Endothelial cell of umbilical vein (primary cell): ENCODE measurements at regions of chr5 and their contacts with region 1.

Region 1: GRCh38 chr5:41843456-41844370 is 26.5 kb downstream of the OXCT1 start:
- DNase-seq: peak; percentile 66
- H3K4me3 ChIP-seq: no peak overlapping the region
- H3K27ac ChIP-seq: no peak overlapping the region
- H3K4me1 ChIP-seq: no peaks in the 10 kb centered on the region
- H3K27me3 ChIP-seq: no peaks in the 10 kb centered on the region
- CTCF ChIP-seq: peak; percentile 61 to 63
- POLR2A ChIP-seq: no peak

Region 2: GRCh38 chr5:40904205-40904993 is 939.3 kb before region 1 on chr5:
- CTCF ChIA-PET with region 1: interaction called, 11 read pairs
- POLR2A ChIA-PET with region 1: no interaction called
- dilution Hi-C with region 1: no loop called
- intact Hi-C with region 1: loop called (anchors 5 kb)
- DNase-seq: peak; percentile 69
- H3K4me3 ChIP-seq: no peak overlapping the region
- H3K27ac ChIP-seq: no peak overlapping the region
- H3K4me1 ChIP-seq: no peaks in the 10 kb centered on the region
- H3K27me3 ChIP-seq: peaks cover 3 to 4% of the 10 kb centered on the region in 2 experiments
- CTCF ChIP-seq: peak; percentile 92 to 95
- POLR2A ChIP-seq: no peak

Region 3: GRCh38 chr5:41695920-41696582 is 147.7 kb before region 1 on chr5:
- CTCF ChIA-PET with region 1: interaction called, 39 read pairs
- POLR2A ChIA-PET with region 1: no interaction called
- dilution Hi-C with region 1: no loop called
- intact Hi-C with region 1: loop called (anchors 1 kb)
- DNase-seq: no peak
- H3K4me3 ChIP-seq: no peak overlapping the region
- H3K27ac ChIP-seq: no peak overlapping the region
- H3K4me1 ChIP-seq: no peaks in the 10 kb centered on the region
- H3K27me3 ChIP-seq: peaks cover 6 to 11% of the 10 kb centered on the region in 2 experiments
- CTCF ChIP-seq: peak; percentile 17 to 34
- POLR2A ChIP-seq: no peak

Region 4: GRCh38 chr5:41716382-41716781 is 127.3 kb before region 1 on chr5:
- CTCF ChIA-PET with region 1: interaction called, 155 read pairs
- POLR2A ChIA-PET with region 1: no interaction called
- dilution Hi-C with region 1: no loop called
- intact Hi-C with region 1: no loop called
- DNase-seq: no peak
- H3K4me3 ChIP-seq: no peak overlapping the region
- H3K27ac ChIP-seq: no peak overlapping the region
- H3K4me1 ChIP-seq: no peaks in the 10 kb centered on the region
- H3K27me3 ChIP-seq: peaks cover 0 to 1% of the 10 kb centered on the region in 2 experiments
- CTCF ChIP-seq: no peak
- POLR2A ChIP-seq: no peak

Region 5: GRCh38 chr5:41763081-41763480 is 80.6 kb before region 1 on chr5:
- CTCF ChIA-PET with region 1: interaction called, 10 read pairs
- POLR2A ChIA-PET with region 1: no interaction called
- dilution Hi-C with region 1: no loop called
- intact Hi-C with region 1: no loop called
- DNase-seq: no peak
- H3K4me3 ChIP-seq: no peak overlapping the region
- H3K27ac ChIP-seq: no peak overlapping the region
- H3K4me1 ChIP-seq: no peaks in the 10 kb centered on the region
- H3K27me3 ChIP-seq: no peaks in the 10 kb centered on the region
- CTCF ChIP-seq: no peak
- POLR2A ChIP-seq: no peak

Region 6: GRCh38 chr5:41794473-41794872 is 49.2 kb before region 1 on chr5:
- CTCF ChIA-PET with region 1: interaction called, 20 read pairs
- POLR2A ChIA-PET with region 1: no interaction called
- dilution Hi-C with region 1: no loop called
- intact Hi-C with region 1: loop called (anchors 2 kb)
- DNase-seq: peak; percentile 95
- H3K4me3 ChIP-seq: peak overlapping the region in 1 of 3 experiments; percentile 47
- H3K27ac ChIP-seq: peak overlapping the region; percentile 97
- H3K4me1 ChIP-seq: peaks cover 52% of the 10 kb centered on the region
- H3K27me3 ChIP-seq: no peaks in the 10 kb centered on the region
- CTCF ChIP-seq: no peak
- POLR2A ChIP-seq: peak; percentile 43

Region 7: GRCh38 chr5:41856644-41857491 is 13.2 kb after region 1 on chr5:
- CTCF ChIA-PET with region 1: interaction called, 13 read pairs
- POLR2A ChIA-PET with region 1: no interaction called
- dilution Hi-C with region 1: no loop called
- intact Hi-C with region 1: no loop called
- DNase-seq: peak; percentile 77
- H3K4me3 ChIP-seq: no peak overlapping the region
- H3K27ac ChIP-seq: no peak overlapping the region
- H3K4me1 ChIP-seq: no peaks in the 10 kb centered on the region
- H3K27me3 ChIP-seq: no peaks in the 10 kb centered on the region
- CTCF ChIP-seq: peak; percentile 61
- POLR2A ChIP-seq: no peak

Region 8: GRCh38 chr5:42216904-42217303 is 373.2 kb after region 1 on chr5:
- CTCF ChIA-PET with region 1: no interaction called
- POLR2A ChIA-PET with region 1: no interaction called
- dilution Hi-C with region 1: no loop called
- intact Hi-C with region 1: no loop called
- DNase-seq: no peak
- H3K4me3 ChIP-seq: no peak overlapping the region
- H3K27ac ChIP-seq: no peak overlapping the region
- H3K4me1 ChIP-seq: no peaks in the 10 kb centered on the region
- H3K27me3 ChIP-seq: no peaks in the 10 kb centered on the region
- CTCF ChIP-seq: no peak
- POLR2A ChIP-seq: no peak

Region 9: GRCh38 chr5:42950440-42951292 is 1107.0 kb after region 1 on chr5:
- CTCF ChIA-PET with region 1: no interaction called
- POLR2A ChIA-PET with region 1: no interaction called
- dilution Hi-C with region 1: no loop called
- intact Hi-C with region 1: no loop called
- DNase-seq: peak; percentile 98
- H3K4me3 ChIP-seq: peak overlapping the region; percentile 11 to 55 (median 49)
- H3K27ac ChIP-seq: peak overlapping the region; percentile 99
- H3K4me1 ChIP-seq: peaks cover 17% of the 10 kb centered on the region
- H3K27me3 ChIP-seq: no peaks in the 10 kb centered on the region
- CTCF ChIP-seq: no peak
- POLR2A ChIP-seq: peak; percentile 86